ENCODE measurements at regions of chr3 and their contacts with region 1.

Region 1: DNA sequence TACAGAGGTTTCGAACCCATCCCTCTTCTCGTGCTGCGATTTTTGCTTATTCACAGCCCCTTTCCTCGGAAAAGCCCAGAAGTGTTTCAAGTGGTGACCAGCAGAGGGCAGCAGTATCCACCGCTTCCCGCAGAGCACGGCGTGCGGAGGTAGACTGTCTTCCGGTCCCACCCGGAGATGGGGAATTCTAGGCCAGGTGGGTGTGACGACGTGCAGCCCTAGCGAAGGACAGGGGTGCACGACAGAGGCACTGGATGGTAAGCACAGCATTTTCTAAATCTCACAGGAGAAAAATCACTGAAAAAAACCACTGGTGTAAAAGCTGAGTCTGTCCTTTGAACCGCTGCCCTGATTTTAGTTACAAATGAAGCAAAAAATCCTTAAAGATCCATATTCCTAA is 7.4 kb upstream of the PSMD6 start:
- DNase-seq: peak; percentile 75
- H3K4me3 ChIP-seq: no peak overlapping the region
- H3K27ac ChIP-seq: no peak overlapping the region
- H3K4me1 ChIP-seq: no peaks in the 10 kb centered on the region
- H3K27me3 ChIP-seq: peaks cover 3% of the 10 kb centered on the region
- CTCF ChIP-seq: peak; percentile 82

Region 2: DNA sequence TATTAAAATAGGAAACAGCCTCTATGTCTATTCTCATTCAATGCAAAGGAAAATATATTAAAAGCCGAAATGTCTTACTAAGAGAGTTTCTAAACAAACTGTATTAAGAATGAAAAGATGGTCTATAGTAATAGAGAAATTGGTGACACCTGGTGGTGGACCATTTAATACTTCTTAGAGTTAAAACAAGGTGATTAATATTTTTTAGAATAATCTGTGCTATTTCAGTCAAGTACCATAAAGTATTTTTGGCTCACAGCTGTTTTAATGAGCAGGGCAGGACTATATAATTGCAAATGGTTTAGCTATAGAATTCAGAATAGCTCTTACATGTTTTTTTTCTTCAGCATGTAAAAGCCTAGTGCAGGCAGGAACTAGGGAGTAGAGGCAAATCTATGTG is 696.9 kb before region 1 on chr3:
- intact Hi-C with region 1: no loop called
- DNase-seq: no peak
- H3K4me3 ChIP-seq: no peak overlapping the region
- H3K27ac ChIP-seq: no peak overlapping the region
- H3K4me1 ChIP-seq: no peaks in the 10 kb centered on the region
- H3K27me3 ChIP-seq: no peaks in the 10 kb centered on the region
- CTCF ChIP-seq: no peak

Region 3: DNA sequence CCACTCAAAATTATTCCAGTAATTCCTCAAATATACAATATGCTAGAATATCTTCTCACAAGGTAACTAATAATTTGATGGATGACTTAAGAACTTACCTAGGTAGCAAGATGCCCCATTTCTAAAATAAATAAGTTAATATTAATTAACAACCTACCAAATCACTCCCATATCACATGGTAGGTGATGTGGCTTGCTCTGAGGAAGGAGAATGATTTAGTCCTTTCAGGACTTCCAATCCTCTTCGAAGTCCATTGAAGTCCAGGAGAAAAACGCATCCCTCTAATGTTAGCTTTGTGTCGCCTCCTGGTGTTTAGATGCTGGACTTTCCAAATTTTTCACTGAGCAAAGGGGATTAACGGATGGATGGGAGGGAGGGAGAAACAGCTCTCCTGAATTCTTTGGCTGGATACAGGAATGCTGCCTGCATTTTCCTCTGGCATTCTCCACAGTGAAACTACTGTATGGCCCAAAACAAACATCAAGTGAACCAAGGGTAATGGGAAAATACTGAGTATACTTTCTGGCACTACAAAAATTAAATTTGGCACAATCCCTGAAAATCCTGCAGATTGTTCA is 135.9 kb after region 1 on chr3:
- intact Hi-C with region 1: loop called (anchors 5 kb)
- DNase-seq: no peak
- H3K4me3 ChIP-seq: no peak overlapping the region
- H3K27ac ChIP-seq: no peak overlapping the region
- H3K4me1 ChIP-seq: no peaks in the 10 kb centered on the region
- H3K27me3 ChIP-seq: no peaks in the 10 kb centered on the region
- CTCF ChIP-seq: no peak

Region 4: DNA sequence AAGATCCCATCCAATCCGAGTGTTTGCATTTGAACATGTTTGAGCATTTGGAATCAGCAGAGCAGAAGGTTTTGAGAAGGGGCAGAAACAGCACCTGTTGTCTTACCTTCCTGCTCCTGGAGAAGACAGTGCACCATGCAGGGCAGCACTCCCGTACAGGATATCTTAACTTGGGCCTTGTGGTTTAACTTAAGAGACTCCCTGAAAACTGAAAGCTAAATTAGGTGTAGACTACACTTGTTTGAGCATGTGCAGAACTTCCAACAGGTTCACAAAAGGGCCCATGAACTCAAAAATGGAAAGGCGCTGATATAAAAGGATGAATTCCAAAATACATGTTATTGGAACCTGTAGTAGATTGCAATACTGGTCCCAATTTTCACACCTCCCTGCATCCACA is 370.0 kb after region 1 on chr3:
- intact Hi-C with region 1: loop called (anchors 2 kb)
- DNase-seq: no peak
- H3K4me3 ChIP-seq: no peak overlapping the region
- H3K27ac ChIP-seq: no peak overlapping the region
- H3K4me1 ChIP-seq: no peaks in the 10 kb centered on the region
- H3K27me3 ChIP-seq: no peaks in the 10 kb centered on the region
- CTCF ChIP-seq: no peak

Region 5: DNA sequence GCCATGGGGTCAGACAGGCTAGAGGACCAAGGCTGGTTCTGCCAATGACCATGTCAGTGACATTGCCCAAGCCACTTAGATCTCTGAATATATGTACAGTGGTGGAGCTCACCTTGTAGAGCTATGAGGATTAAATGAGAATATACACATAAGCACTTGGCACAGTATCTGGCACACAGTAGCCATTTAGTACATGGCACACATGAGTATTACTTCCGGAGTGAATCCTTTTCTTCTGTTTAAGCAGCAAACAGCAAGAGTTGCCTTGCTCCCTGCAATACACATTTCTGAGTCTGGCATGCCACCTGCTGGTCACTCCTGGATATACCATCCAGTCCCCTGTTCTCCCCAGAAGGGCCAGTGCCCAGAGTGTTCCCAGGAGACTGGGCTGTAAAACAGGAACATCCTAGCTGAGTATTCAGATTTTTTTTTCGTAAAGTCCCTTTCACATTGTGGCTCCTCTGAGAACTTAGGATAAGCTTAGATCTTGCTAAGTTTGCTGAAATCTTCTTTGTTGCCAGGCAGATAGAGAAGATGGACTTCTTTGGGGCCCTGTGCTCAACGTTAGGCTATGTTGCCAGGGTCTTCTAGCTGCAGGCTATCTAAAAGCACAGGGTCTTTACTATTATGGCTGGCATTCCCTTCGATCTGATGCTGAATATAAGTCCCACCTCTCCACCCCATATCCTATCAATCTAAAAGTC is 453.7 kb after region 1 on chr3:
- intact Hi-C with region 1: loop called (anchors 5 kb)
- DNase-seq: peak; percentile 81
- H3K4me3 ChIP-seq: no peak overlapping the region
- H3K27ac ChIP-seq: no peak overlapping the region
- H3K4me1 ChIP-seq: no peaks in the 10 kb centered on the region
- H3K27me3 ChIP-seq: no peaks in the 10 kb centered on the region
- CTCF ChIP-seq: peak; percentile 89

Measured in colonic mucosa (tissue), 4 donors.